ENCODE measurements at regions of chr4 and their contacts with region 1.

Region 1: DNA sequence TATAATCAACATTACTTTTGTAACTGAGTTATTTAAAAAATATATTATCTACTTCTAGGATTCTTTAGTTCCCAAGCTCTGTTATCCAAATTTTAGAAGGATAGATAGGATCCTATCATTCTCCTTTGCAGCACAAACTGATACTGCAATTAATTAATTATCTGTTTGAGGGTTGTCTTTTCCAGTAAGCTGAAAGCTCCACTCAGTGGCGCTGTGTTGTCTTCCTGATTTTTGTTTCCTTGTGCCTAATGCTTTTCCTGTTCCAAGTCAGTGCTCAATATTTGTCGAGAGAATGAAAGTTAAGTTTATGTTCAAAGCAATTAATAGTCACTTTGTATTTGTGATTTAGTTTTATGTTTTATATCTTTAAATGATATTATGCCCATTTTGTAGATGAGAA is 107.4 kb upstream of the ANK2 start:
- DNase-seq: no peak
- ATAC-seq: no peak
- H3K4me3 ChIP-seq: no peak overlapping the region
- H3K27ac ChIP-seq: no peak overlapping the region
- H3K4me1 ChIP-seq: no peaks in the 10 kb centered on the region
- H3K27me3 ChIP-seq: no peaks in the 10 kb centered on the region

Region 2: DNA sequence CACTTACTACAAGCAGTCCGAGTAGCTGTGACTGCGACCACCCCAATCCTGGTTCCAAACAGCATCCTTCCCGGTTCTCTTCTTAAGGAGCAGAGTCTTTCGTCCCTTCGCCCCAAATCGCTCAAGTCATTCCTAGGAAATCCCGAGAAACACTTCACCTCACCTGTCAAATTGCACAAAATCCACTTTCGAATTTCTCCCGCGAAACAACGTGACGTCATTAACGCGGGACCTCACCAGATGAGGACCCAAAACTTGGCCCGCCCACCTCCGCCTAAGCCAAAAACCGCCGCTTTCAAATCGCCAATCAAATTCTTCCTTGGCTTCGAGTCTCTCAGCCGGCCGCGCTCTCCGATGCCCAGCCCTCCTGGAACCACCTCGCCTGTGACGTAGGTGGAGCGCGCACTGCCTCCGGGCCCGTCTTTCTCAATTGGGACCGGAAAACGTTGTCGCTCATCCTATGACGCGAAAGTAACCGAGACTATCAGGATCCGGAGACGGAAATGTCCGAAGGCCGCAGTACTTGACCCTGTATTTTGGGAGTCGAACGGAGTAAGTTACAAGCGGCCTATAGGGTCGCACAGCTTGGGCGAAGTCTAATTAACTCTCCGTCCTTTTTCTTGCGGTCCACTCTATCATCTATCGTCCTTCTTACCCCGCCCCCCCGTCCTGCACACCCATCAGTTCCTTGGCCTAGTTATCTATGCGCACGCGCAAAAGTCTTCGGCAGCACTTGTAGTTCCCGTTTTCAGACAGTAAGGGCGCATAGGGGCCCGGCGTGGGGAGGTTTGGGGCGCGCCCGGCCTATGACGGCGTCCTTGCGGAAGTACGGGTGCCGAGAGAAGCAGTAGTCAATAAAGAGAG is 305.2 kb before region 1 on chr4 and contains the starts of genes LARP7 and ZGRF1:
- intact Hi-C with region 1: loop called in 1 of 4 experiments (anchors 10 kb)
- DNase-seq: peak; percentile 99
- ATAC-seq: peak; percentile 98 to 99
- H3K4me3 ChIP-seq: peak within 1 kb of the TSS; percentile 91
- H3K27ac ChIP-seq: peak within 1 kb of the TSS; percentile 96
- H3K4me1 ChIP-seq: no peaks in the 10 kb centered on the region
- H3K27me3 ChIP-seq: no peaks in the 10 kb centered on the region
- total RNA-seq, gene LARP7: 46.4 to 54.8 (median 49.5) TPM
- total RNA-seq, gene ZGRF1: 1.9 to 2.5 (median 2.4) TPM

Region 3: DNA sequence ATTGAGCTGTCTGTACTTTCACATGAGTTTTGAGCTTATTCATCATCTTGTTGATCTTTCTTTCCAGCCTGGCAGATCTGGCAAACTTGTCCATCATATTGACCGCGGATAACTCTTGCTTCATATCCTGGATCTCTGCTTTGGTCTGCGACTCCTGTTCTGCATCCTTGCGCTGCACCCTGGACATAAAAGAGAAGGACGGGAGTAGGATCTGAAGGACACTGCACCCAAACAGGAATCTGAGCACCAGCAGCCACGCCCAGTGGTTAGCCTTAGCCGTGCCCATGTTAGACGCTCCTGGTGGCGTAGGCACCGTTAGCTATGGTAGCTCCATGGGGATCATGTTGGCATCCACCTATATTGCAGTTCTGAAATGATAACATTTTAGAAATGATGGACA is 248.6 kb before region 1 on chr4:
- intact Hi-C with region 1: no loop called
- DNase-seq: no peak
- ATAC-seq: no peak
- H3K4me3 ChIP-seq: no peak overlapping the region
- H3K27ac ChIP-seq: no peak overlapping the region
- H3K4me1 ChIP-seq: no peaks in the 10 kb centered on the region
- H3K27me3 ChIP-seq: no peaks in the 10 kb centered on the region

Region 4: DNA sequence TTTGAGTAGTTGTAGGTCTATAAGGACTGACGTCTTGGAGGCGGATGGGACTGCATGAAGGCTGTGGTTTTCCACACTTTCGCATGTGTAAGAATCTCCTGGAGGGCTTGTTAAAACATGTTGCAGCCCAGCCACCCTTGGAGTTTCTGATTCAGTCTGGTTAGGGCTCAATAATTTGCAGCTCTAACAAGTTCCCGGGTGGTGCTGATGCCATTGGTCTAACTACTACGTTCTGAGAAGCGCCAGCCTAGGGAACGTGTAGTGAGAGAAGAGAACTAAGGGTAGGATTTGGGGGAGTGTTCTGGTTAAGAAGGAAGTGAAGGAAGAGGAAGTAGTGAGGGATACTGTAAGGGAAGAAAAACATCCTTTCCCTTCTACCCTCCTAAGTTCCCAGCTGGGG is 166.3 kb before region 1 on chr4:
- intact Hi-C with region 1: loop called in 1 of 4 experiments (anchors 10 kb)
- DNase-seq: no peak
- ATAC-seq: no peak
- H3K4me3 ChIP-seq: no peak overlapping the region
- H3K27ac ChIP-seq: no peak overlapping the region
- H3K4me1 ChIP-seq: no peaks in the 10 kb centered on the region
- H3K27me3 ChIP-seq: no peaks in the 10 kb centered on the region